ENCODE measurements at regions of chr1 and their contacts with region 1.

Region 1: GRCh38 chr1:28971980-28972771 is 57.8 kb downstream of the EPB41 start:
- DNase-seq: peak; percentile 26
- H3K4me3 Mint-ChIP-seq: no peak overlapping the region
- H3K27ac Mint-ChIP-seq: peak overlapping the region; percentile 73
- H3K4me1 Mint-ChIP-seq: peaks cover 61% of the 10 kb centered on the region
- H3K27me3 Mint-ChIP-seq: no peaks in the 10 kb centered on the region

Region 2: DNA sequence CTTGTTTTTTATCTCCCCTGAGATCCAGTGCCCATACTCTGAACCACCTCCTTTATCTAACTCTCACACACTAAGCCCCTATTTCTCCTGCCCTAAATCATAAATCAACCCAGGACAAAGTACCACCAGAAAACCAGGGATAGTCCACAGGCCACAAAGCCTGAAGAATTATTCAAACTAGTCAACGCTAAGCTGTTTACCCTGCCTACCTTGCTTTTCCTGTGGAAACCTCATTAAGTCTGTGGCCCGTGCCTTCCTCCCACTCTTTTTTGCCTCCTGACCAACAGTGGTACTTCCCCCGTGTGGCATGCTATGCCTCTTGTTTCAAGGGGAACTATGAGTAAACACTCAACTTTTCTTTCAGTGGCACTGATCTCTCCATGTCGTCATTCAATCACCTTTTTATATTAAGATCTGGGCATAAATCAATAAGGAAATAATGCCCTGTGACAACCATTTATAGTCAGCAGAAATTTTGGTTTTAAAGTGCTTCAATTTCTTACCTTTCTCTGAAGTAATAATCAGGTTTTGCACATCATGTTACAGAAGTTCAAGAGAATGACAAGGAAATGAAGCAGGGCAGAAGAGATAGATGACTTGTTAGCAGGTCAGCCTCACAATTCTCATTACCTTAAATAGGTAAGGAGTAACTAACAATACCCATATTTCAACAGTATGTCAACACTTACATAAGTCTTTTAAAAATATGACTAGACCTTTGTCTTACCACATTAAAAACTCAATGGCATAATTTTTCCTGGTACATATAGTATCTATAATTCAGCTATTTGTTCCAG is 915.8 kb before region 1 on chr1:
- CTCF ChIA-PET with region 1: no interaction called
- intact Hi-C with region 1: loop called (anchors 10 kb)
- DNase-seq: peak; percentile 85
- H3K4me3 Mint-ChIP-seq: no peak overlapping the region
- H3K27ac Mint-ChIP-seq: peak overlapping the region; percentile 59
- H3K4me1 Mint-ChIP-seq: peaks cover 45% of the 10 kb centered on the region
- H3K27me3 Mint-ChIP-seq: no peaks in the 10 kb centered on the region

Measured in activated naive CD4-positive, alpha-beta T cell treated with anti-CD3 and anti-CD28 coated beads for 36 hours (primary cell).